ENCODE measurements at regions of chr2 and their contacts with region 1.

Region 1: GRCh38 chr2:197322724-197323720 is 12.4 kb upstream of the ANKRD44 start:
- DNase-seq: no peak
- CTCF ChIP-seq: no peak

Region 2: DNA sequence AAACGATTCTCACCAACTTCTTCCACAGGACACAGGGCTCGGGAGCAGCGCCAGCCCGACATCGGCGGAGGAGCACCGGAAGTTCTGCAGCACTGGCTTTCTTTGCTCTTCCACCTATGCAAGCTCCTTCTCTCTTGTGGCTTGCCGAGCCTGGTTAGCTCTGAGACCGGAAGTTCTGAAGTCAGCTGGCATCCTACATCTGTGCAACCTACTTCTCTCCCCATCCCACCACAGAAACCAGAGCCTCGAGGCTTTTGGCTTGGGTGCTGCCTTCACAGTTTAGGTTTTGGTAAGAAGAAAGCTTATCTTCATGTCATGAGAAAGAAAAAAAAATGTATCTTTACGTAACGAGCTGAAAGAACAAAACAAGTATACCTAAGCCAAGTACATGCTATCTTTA is 124.1 kb before region 1 on chr2:
- in situ Hi-C with region 1: loop called (anchors 5 kb)
- DNase-seq: peak; percentile 70
- CTCF ChIP-seq: no peak

Measured in GM13977 (cell line).